Kidney (tissue), 22 donors: ENCODE measurements at regions of chr21 and their contacts with region 1.

Region 1: DNA sequence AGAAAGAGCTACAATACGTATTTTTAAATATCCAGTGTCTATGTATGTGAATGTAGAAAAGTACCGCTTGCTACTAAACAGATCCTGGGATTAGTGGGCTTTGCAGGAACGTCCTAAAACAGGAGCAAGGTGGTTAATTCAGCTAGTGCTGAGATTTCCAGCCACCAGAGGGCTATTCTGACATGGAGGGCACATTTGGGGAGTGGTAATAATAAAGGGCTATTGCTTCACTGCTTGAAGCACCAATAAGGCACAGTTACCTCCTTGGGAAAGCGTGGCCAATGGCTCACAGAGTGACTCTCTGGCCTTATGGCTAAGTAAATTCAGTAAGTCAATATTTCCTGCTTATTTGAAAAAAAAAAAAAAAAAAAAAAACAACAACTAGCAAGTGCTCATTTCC is 152.4 kb downstream of the GABPA start:
- DNase-seq: no peak
- H3K4me3 ChIP-seq: no peak overlapping the region
- H3K27ac ChIP-seq: peak overlapping the region; percentile 4 to 45
- H3K4me1 ChIP-seq: peaks cover 0 to 31% (median 27%) of the 10 kb centered on the region in 3 donors
- H3K27me3 ChIP-seq: no peaks in the 10 kb centered on the region
- CTCF ChIP-seq: no peak

Region 2: DNA sequence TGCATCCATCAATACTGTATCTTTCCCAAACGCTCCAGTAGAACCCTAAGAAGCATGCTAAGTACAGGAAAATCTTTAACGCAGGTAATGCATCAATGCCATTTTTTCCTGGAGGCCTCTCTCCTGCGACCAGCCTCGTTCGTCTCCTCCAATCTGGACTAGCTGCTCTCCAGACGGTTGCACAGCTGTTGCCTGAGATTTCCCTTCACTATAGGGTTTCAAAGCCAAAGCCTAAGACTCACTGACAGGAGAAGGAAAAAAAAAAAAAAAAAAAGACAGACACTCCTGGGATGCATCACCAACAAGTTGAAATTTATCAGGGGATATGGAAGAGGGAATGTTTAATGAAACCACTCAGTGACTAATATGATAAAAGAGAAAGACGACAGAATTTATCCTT is 190.4 kb after region 1 on chr21:
- intact Hi-C with region 1: no loop called
- DNase-seq: peak in 3 of 5 donors; percentile 24 to 39 (median 39)
- H3K4me3 ChIP-seq: no peak overlapping the region
- H3K27ac ChIP-seq: no peak overlapping the region
- H3K4me1 ChIP-seq: no peaks in the 10 kb centered on the region
- H3K27me3 ChIP-seq: no peaks in the 10 kb centered on the region
- CTCF ChIP-seq: no peak

Region 3: GRCh38 chr21:26148079-26148839 is 261.1 kb after region 1 on chr21:
- intact Hi-C with region 1: no loop called
- DNase-seq: peak; percentile 68 to 89 (median 75)
- H3K4me3 ChIP-seq: peak overlapping the region in 1 of 3 donors; percentile 11
- H3K27ac ChIP-seq: peak overlapping the region; percentile 45 to 57
- H3K4me1 ChIP-seq: peaks cover 7 to 22% (median 19%) of the 10 kb centered on the region in 3 donors
- H3K27me3 ChIP-seq: no peaks in the 10 kb centered on the region
- CTCF ChIP-seq: no peak

Region 4: DNA sequence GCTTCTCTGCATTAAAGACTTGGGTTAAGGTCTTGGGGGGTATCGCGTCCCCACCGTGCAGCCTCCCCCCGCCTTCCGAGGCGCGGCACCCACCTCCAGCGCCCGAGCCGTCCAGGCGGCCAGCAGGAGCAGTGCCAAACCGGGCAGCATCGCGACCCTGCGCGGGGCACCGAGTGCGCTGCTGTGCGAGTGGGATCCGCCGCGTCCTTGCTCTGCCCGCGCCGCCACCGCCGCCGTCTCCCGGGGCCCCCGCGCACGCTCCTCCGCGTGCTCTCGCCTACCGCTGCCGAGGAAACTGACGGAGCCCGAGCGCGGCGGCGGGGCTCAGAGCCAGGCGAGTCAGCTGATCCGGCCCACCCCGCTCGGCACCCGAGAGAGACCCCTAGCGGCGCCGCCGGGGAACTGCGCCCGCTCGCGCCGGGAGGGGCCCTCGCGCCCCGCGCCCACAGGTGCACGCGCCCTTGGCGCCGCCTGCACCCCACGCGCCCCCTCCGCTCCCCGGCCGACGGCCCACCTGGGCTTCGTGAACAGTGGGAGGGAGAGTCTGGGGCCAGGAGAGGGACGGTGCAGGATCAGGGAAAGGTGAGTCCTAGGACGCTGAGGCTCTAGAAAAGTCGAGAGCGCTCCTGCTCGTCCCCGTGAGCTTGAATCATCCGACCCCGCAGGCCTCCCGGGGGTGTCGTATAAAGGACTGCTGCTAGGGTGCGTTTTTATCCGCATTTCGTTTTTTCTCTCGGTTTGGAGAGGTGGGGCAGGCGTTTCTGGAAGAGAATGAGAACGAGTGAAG is 283.5 kb after region 1 on chr21 and contains the start of gene APP:
- intact Hi-C with region 1: loop called (anchors 5 kb)
- DNase-seq: peak; percentile 87 to 94 (median 90)
- H3K4me3 ChIP-seq: peak within 1 kb of the TSS; percentile 86 to 90 (median 87)
- H3K27ac ChIP-seq: peak within 1 kb of the TSS; percentile 96 to 98
- H3K4me1 ChIP-seq: peaks cover 0 to 7% (median 2%) of the 10 kb centered on the region in 3 donors
- H3K27me3 ChIP-seq: no peaks in the 10 kb centered on the region
- CTCF ChIP-seq: peak; percentile 91
- total RNA-seq, gene APP: 1,303 TPM